Activated CD4-positive, alpha-beta T cell treated with anti-CD3 and anti-CD28 coated beads for 36 hours (primary cell): ENCODE measurements at regions of chr7 and their contacts with region 1.

Region 1: GRCh38 chr7:974820-975681 is at the start of gene COX19:
- DNase-seq: peak; percentile 96
- ATAC-seq: peak; percentile 93
- H3K4me3 Mint-ChIP-seq: peak within 1 kb of the TSS; percentile 94
- H3K27ac Mint-ChIP-seq: peak within 1 kb of the TSS; percentile 94
- H3K4me1 Mint-ChIP-seq: peaks cover 30% of the 10 kb centered on the region
- H3K27me3 Mint-ChIP-seq: no peaks in the 10 kb centered on the region
- total RNA-seq, gene COX19: 11.3 to 14.6 TPM

Region 2: DNA sequence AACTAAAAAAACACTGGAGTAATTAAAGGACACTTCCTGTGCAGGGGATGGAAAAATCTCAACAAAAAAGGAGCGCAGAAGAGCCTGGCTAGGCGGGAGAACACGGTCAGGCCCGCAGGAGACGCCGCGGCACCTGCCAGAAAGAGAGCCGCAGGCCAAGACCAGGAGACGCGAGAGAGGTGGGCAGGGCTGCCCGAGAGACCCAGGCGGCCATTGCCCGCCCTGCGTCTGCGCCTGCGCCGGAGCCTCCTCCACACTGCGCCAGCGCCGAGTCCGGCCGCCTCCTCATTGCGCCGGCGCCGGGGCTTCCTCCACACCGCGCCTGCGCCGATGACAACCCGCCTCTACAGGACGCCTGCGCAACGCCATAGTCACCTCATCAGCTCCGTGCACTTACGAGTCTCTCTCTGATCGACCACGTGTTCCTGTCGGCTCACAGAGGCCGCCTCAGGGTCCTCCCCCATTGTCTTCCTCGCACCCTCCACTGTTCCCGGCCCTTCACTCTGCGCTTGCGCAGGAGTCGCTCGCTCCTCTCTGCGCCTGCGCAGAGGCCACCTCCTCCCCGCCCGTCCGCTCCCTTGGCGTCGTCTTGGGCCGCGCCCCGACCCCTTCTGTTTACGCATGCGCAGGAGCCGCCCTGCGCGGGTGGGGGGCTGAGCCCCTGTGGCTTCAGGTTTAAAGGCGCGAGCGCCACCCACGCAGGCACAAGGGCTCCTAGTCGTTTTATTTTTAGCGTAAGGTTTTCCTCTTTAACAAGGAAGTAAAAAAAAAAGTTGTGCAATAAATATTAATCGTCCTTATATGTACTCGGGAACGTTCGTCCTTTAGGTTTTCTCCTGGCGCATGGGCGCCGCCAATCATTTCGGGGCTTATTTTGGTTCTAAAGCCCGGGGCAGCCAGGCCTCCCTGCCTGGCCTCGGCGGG is 825.9 kb before region 1 on chr7:
- CTCF ChIA-PET with region 1: no interaction called
- POLR2A ChIA-PET with region 1: no interaction called
- intact Hi-C with region 1: loop called in 1 of 2 experiments (anchors 2 kb)
- DNase-seq: peak; percentile 98
- ATAC-seq: peak; percentile 99
- H3K4me3 Mint-ChIP-seq: peak overlapping the region; percentile 87
- H3K27ac Mint-ChIP-seq: peak overlapping the region; percentile 97
- H3K4me1 Mint-ChIP-seq: peaks cover 13% of the 10 kb centered on the region
- H3K27me3 Mint-ChIP-seq: no peaks in the 10 kb centered on the region

Region 3: DNA sequence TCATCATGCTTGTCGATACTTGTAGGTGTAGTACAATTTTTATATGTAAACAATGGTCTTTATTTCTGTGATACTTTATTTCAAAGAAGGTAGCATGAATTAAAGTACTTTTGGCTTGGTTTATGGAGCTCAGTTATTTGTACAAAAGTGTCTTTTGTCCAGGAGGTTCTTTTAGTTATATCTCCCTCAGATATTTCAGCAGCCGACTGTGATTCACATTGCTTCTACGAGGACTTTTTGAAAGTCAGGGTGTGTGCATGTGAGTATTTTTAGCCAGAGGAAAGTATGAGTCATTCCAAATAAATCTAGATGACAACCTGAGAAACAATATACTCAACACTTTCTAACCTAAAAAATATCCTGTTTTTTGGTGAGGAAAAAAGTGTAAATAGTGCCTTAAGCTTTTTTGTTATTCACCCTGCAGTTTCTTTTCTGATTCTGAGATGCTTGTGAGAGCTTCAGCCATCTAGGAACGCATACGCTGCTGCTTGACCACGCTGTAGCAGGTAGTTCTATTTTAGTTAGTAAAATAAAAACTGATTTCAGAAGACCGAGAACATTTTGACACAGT is 143.4 kb before region 1 on chr7:
- CTCF ChIA-PET with region 1: no interaction called
- POLR2A ChIA-PET with region 1: no interaction called
- intact Hi-C with region 1: loop called in 1 of 2 experiments (anchors 2 kb)
- DNase-seq: no peak
- ATAC-seq: peak; percentile 69
- H3K4me3 Mint-ChIP-seq: peak overlapping the region; percentile 63
- H3K27ac Mint-ChIP-seq: peak overlapping the region; percentile 98
- H3K4me1 Mint-ChIP-seq: peaks cover 64% of the 10 kb centered on the region
- H3K27me3 Mint-ChIP-seq: no peaks in the 10 kb centered on the region

Region 4: DNA sequence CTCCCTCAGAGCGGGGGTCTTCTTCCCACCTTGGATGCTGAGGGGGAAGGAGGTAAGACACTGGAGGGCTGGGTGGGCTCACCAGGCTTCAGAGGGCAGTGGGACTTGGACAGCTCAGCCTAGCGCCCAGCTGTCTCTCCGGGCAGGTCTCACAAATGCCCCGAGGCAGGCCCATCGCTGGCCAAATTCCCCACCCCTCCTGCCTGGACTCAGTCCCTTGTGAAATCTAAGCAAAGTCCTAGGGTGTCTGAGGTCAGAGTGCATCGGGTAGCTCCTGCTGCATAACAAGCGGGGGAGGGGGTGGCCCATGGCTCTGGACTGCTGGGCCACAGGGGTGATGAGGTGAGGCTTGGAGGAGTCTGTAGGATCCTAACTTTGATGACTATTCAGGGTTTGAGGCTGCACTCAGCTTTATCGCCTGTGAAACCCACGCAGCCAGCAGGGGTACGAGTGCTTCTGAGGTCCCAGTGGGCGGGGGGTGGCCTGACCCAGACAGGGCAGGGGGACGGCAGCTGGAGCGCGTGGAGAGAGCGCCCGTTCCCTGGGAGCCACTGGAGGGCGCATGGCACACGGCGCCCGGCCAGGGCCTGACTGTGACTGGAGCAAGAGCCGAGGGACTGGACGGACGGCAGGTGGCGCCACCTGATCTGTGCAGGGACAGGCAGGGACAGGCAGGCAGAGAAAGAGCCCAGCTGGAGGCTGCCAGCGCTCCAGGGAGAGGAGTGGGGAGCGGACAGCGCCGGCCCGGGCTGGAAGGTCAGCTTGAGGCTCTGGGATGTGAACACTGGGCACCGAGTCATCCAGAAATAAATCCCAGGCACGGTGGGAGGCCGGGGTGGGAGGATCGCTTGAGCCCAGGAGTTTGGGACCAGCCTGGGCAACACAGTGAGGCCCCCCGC is 17.9 kb after region 1 on chr7:
- CTCF ChIA-PET with region 1: interaction called, 10 read pairs
- POLR2A ChIA-PET with region 1: no interaction called
- intact Hi-C with region 1: loop called in 1 of 2 experiments (anchors 1 kb)
- DNase-seq: peak; percentile 99
- ATAC-seq: peak; percentile 100
- H3K4me3 Mint-ChIP-seq: no peak overlapping the region
- H3K27ac Mint-ChIP-seq: no peak overlapping the region
- H3K4me1 Mint-ChIP-seq: peaks cover 3% of the 10 kb centered on the region
- H3K27me3 Mint-ChIP-seq: no peaks in the 10 kb centered on the region

Region 5: DNA sequence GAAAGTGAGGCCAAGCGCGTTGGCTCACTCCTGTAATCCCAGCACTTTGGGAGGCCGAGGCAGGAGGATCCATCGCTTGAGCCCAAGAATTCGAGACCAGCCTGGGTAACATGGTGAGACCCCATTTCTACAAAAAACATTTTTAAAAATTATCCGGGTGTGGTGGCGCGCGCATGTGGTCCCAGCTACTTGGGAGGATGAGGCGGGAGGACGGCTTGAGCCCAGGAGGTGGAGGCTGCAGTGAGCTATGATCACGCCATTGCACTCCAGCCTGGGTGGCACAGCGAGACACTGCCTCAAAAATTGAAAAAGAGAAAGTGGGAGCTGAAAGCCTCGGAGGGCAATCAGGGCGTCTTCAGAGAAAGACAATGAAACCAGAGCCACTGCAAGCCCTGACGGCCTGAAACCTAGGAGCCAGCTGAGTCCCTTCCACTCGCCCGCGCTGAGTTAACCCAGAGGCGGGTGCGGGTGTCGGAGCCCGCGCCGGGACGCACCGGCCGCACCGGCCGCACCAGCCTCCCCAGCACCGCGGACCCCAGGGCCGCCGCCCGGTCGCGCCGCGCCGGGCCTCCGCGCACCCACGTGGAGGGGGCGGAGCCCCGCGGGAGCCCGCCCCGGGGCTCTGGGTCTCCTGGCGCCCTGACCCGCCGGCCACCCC is 162.6 kb after region 1 on chr7:
- CTCF ChIA-PET with region 1: no interaction called
- POLR2A ChIA-PET with region 1: interaction called, 6 read pairs
- intact Hi-C with region 1: loop called in 1 of 2 experiments (anchors 1 kb)
- DNase-seq: no peak
- ATAC-seq: peak; percentile 54
- H3K4me3 Mint-ChIP-seq: peak overlapping the region; percentile 75
- H3K27ac Mint-ChIP-seq: peak overlapping the region; percentile 69
- H3K4me1 Mint-ChIP-seq: peaks cover 21% of the 10 kb centered on the region
- H3K27me3 Mint-ChIP-seq: no peaks in the 10 kb centered on the region

Region 6: GRCh38 chr7:1412322-1413261 is 437.5 kb after region 1 on chr7:
- CTCF ChIA-PET with region 1: no interaction called
- POLR2A ChIA-PET with region 1: no interaction called
- intact Hi-C with region 1: loop called in 1 of 2 experiments (anchors 1 kb)
- DNase-seq: peak; percentile 97
- ATAC-seq: peak; percentile 82
- H3K4me3 Mint-ChIP-seq: no peak overlapping the region
- H3K27ac Mint-ChIP-seq: no peak overlapping the region
- H3K4me1 Mint-ChIP-seq: peaks cover 14% of the 10 kb centered on the region
- H3K27me3 Mint-ChIP-seq: peaks cover 5% of the 10 kb centered on the region